ENCODE measurements at regions of chr3 and their contacts with region 1.

Region 1: DNA sequence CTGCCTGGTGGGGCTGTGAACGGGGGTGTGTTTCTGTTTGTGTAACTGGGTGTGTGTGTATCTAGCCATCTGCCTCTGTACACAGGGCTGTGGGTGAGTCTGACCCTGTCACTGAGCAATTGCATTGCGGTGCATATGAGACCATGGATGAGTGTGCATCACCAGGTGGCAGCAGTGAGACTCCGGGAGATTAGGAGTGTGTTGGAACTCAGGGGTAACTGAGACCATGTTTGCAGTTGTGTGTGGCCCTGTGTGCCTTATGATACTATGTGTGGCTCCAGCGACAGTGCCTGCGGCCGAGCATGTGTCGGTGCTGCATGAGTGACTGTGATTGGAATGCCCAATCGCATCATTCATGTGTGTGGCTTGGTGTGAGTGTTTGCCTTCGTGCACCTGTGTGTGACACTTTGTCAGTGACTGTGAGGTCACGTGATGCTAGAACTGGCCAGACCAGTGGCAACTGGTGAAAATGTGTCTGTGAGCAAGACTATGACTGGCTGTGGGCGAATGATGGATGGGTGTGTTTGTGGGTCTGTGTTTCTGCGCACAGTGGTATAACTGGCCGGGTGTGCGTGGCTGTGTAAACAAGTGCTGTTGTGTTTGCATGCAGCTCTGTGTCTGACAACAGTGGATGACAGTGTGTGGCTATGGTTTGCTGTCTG is 14.0 kb downstream of the VILL start:
- DNase-seq: no peak
- ATAC-seq: peak; percentile 85
- H3K4me3 ChIP-seq: no peak overlapping the region
- H3K27ac ChIP-seq: no peak overlapping the region
- H3K4me1 ChIP-seq: no peaks in the 10 kb centered on the region; the same call in 1 of the 2 replicates
- H3K27me3 ChIP-seq: no peaks in the 10 kb centered on the region
- CTCF ChIP-seq: peak; percentile 68 to 76 (median 73)
- EP300 ChIP-seq: no peak
- POLR2A ChIP-seq: no peak
- RAD21 ChIP-seq: peak; percentile 39; the same call in 1 of the 2 replicates

Region 2: GRCh38 chr3:38039899-38040261 is 35.3 kb after region 1 on chr3:
- CTCF ChIA-PET with region 1: interaction called, 4 read pairs
- POLR2A ChIA-PET with region 1: no interaction called
- RAD21 ChIA-PET with region 1: no interaction called
- SMC1A ChIA-PET with region 1: no interaction called
- in situ Hi-C with region 1: no loop called
- intact Hi-C with region 1: loop called (anchors 1 kb)
- DNase-seq: peak; percentile 16
- ATAC-seq: peak; percentile 85
- H3K4me3 ChIP-seq: peak overlapping the region; percentile 71; the same call in 1 of the 2 replicates
- H3K27ac ChIP-seq: no peak overlapping the region
- H3K4me1 ChIP-seq: peaks cover 13% of the 10 kb centered on the region
- H3K27me3 ChIP-seq: peaks cover 0 to 3% of the 10 kb centered on the region in 2 experiments; a peak in 2 of 4 replicates
- CTCF ChIP-seq: peak; percentile 30 to 57 (median 34); a peak in 3 of 6 replicates
- EP300 ChIP-seq: no peak
- POLR2A ChIP-seq: no peak
- RAD21 ChIP-seq: no peak

Measured in GM12878 (cell line).